PC-3 (cell line): ENCODE measurements at regions of chr17 and their contacts with region 1.

Region 1: GRCh38 chr17:69654981-69655855 is 240.7 kb downstream of the MAP2K6 start:
- DNase-seq: peak; percentile 94
- ATAC-seq: peak; percentile 100
- H3K4me3 ChIP-seq: no peak overlapping the region
- H3K27ac ChIP-seq: peak overlapping the region; percentile 11; the same call in 1 of the 2 replicates
- H3K4me1 ChIP-seq: peaks cover 18% of the 10 kb centered on the region
- H3K27me3 ChIP-seq: no peaks in the 10 kb centered on the region
- CTCF ChIP-seq: no peak

Region 2: GRCh38 chr17:69575346-69575761 is 79.9 kb before region 1 on chr17:
- CTCF ChIA-PET with region 1: no interaction called
- POLR2A ChIA-PET with region 1: no interaction called
- intact Hi-C with region 1: loop called (anchors 2 kb)
- DNase-seq: peak; percentile 97
- ATAC-seq: peak; percentile 87
- H3K4me3 ChIP-seq: no peak overlapping the region; the same call in 1 of the 2 replicates
- H3K27ac ChIP-seq: peak overlapping the region; percentile 58
- H3K4me1 ChIP-seq: peaks cover 25% of the 10 kb centered on the region
- H3K27me3 ChIP-seq: no peaks in the 10 kb centered on the region
- CTCF ChIP-seq: no peak

Region 3: GRCh38 chr17:69625474-69625873 is 29.7 kb before region 1 on chr17:
- CTCF ChIA-PET with region 1: no interaction called
- POLR2A ChIA-PET with region 1: no interaction called
- intact Hi-C with region 1: no loop called
- DNase-seq: no peak
- ATAC-seq: no peak
- H3K4me3 ChIP-seq: no peak overlapping the region
- H3K27ac ChIP-seq: no peak overlapping the region
- H3K4me1 ChIP-seq: no peaks in the 10 kb centered on the region
- H3K27me3 ChIP-seq: no peaks in the 10 kb centered on the region
- CTCF ChIP-seq: no peak

Region 4: DNA sequence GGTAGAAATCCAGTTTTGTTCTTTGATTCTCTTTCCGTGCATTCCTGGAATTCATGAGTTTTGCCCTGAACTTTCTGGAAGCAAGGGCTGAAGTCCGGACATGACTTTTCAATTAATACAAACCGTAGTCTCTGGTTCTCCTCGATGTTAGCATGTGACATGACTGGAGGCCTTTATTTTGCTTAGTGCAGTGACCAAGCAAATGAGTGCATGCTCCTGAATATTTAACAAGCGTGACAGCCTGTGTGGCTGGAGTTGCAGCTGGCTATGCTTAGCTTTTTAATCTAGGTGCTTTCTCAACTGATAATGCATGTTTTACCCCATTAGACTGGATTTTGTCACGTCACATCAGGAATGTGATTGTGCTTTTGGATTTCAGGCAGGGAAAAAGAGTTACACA is 61.3 kb after region 1 on chr17:
- CTCF ChIA-PET with region 1: no interaction called
- POLR2A ChIA-PET with region 1: no interaction called
- intact Hi-C with region 1: loop called (anchors 10 kb)
- DNase-seq: no peak
- ATAC-seq: no peak
- H3K4me3 ChIP-seq: no peak overlapping the region
- H3K27ac ChIP-seq: no peak overlapping the region
- H3K4me1 ChIP-seq: no peaks in the 10 kb centered on the region
- H3K27me3 ChIP-seq: no peaks in the 10 kb centered on the region
- CTCF ChIP-seq: no peak

Region 5: DNA sequence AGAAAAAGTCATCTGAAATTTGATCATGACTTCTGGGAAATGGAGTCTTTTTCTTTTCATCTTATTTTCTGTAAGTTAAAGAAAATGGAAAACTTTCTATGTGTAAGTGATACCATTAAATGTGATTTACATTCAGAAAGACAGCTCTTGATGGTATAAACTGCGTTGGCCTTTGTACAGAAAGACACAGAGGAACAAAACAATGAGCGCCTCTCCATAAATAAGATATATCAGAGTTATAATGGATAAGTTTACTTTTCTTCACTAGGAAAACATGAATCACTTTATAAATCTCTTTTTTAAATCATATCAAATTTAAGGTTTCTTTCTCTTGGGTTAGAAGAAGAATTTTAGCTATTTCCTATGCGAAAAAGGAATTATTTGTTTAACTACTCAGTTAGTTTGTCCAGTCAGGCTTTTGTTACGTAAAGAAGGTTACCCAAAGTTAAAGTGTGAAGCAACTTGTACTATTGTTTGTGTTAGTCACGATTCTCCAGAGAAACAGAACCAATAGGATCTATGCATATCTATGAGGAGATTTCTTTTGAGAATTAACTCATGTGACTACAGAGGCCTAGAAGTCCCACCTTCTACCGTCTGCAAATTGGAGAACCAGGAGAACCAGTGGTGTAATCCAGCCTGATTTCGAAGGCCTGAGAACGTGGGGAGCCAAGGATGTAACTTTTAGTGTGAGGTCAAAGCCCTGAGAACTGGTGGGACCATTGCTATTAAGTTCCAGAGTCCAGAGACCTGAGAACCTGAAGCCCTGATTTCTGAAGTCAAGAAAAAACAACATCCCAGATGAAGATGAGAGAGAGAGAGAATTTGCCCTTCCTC is 124.4 kb after region 1 on chr17:
- CTCF ChIA-PET with region 1: no interaction called
- POLR2A ChIA-PET with region 1: no interaction called
- intact Hi-C with region 1: loop called (anchors 2 kb)
- DNase-seq: peak; percentile 91
- ATAC-seq: peak; percentile 79
- H3K4me3 ChIP-seq: no peak overlapping the region
- H3K27ac ChIP-seq: peak overlapping the region; percentile 82
- H3K4me1 ChIP-seq: peaks cover 37% of the 10 kb centered on the region
- H3K27me3 ChIP-seq: no peaks in the 10 kb centered on the region
- CTCF ChIP-seq: no peak

Region 6: GRCh38 chr17:69819316-69820087 is 164.3 kb after region 1 on chr17:
- CTCF ChIA-PET with region 1: no interaction called
- POLR2A ChIA-PET with region 1: no interaction called
- intact Hi-C with region 1: loop called (anchors 10 kb)
- DNase-seq: no peak
- ATAC-seq: no peak
- H3K4me3 ChIP-seq: no peak overlapping the region
- H3K27ac ChIP-seq: no peak overlapping the region
- H3K4me1 ChIP-seq: no peaks in the 10 kb centered on the region
- H3K27me3 ChIP-seq: no peaks in the 10 kb centered on the region
- CTCF ChIP-seq: no peak